ENCODE measurements at regions of chr7 and their contacts with region 1.

Region 1: GRCh38 chr7:16645593-16646471 is at the starts of genes ANKMY2 and BZW2:
- DNase-seq: peak; percentile 84 to 97 (median 92)
- ATAC-seq: peak; percentile 83
- H3K4me3 ChIP-seq: peak within 1 kb of the TSS; percentile 96 to 99
- H3K4me3 Mint-ChIP-seq: peak within 1 kb of the TSS; percentile 99
- H3K27ac ChIP-seq: peak within 1 kb of the TSS; percentile 83 to 93
- H3K27ac Mint-ChIP-seq: peak within 1 kb of the TSS; percentile 99
- H3K4me1 ChIP-seq: peaks cover 42% of the 10 kb centered on the region
- H3K4me1 Mint-ChIP-seq: peaks cover 70% of the 10 kb centered on the region
- H3K27me3 ChIP-seq: no peaks in the 10 kb centered on the region
- H3K27me3 Mint-ChIP-seq: no peaks in the 10 kb centered on the region
- CTCF ChIP-seq: no peak
- total RNA-seq, gene ANKMY2: 3.9 TPM
- total RNA-seq, gene BZW2: 23.2 to 23.8 TPM

Region 2: DNA sequence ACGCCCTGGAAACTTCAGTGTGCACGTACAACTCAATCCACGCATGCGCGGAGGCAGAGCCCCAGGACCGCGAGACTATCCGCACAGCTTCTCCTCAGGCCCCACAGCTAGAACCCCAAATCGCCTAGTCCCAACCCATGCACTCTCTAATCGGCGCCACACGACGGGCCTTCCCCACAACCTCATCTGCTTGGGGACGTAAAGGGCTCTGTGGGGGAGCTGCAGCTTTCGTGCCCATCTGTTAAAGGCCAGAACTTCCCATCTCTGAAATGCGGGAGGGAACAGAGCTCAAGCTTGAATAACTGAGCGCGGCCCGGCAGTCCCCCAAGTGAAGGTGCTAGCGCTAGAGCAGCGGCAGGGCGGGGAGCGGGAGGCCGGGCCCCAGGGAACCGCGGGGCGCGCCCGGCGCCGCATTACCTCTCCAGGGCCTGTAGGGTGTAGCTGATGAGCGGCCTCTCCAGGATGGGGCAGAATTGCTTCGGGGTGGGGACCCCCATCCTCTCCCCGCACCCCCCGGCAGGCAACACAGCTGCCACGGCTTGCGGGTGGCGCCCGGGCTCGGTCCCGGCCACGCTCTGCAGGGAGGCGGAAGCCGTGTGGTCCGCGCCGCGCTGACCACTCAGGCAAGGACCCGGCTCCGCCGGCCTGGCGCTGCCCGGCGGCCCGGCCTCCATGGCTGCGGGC is 225.0 kb before region 1 on chr7:
- CTCF ChIA-PET with region 1: interaction called, 3 read pairs
- POLR2A ChIA-PET with region 1: interaction called, 28 read pairs
- intact Hi-C with region 1: loop called (anchors 1 to 5 kb)
- DNase-seq: peak; percentile 46 to 95 (median 82)
- ATAC-seq: peak; percentile 92
- H3K4me3 ChIP-seq: peak overlapping the region; percentile 67 to 71
- H3K4me3 Mint-ChIP-seq: peak overlapping the region; percentile 87
- H3K27ac ChIP-seq: peak overlapping the region; percentile 68 to 89
- H3K27ac Mint-ChIP-seq: peak overlapping the region; percentile 93
- H3K4me1 ChIP-seq: peaks cover 15% of the 10 kb centered on the region
- H3K4me1 Mint-ChIP-seq: peaks cover 29% of the 10 kb centered on the region
- H3K27me3 ChIP-seq: no peaks in the 10 kb centered on the region
- H3K27me3 Mint-ChIP-seq: no peaks in the 10 kb centered on the region
- CTCF ChIP-seq: no peak

Region 3: DNA sequence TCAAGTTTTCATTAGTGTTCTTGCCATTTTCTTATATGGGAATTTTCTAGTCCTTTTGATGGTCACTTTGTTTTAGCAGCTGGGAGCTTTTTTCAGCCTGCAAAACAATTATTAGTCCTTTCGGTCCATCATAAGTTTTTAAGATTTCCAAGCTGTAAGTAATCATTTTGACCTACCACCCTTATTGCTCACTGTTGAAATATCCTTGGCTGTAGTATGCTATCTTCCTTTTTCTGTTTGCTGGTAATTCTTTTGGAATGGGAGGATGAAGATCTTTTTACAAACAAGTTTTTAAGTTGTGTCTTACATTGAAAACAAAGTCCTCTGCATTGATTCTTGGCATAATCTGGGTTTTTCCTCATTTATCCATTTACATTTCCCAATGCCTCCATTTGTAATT is 24.2 kb after region 1 on chr7:
- CTCF ChIA-PET with region 1: no interaction called
- POLR2A ChIA-PET with region 1: no interaction called
- intact Hi-C with region 1: loop called in 1 of 2 experiments (anchors 2 kb)
- DNase-seq: no peak
- ATAC-seq: no peak
- H3K4me3 ChIP-seq: no peak overlapping the region
- H3K4me3 Mint-ChIP-seq: no peak overlapping the region
- H3K27ac ChIP-seq: no peak overlapping the region
- H3K27ac Mint-ChIP-seq: no peak overlapping the region
- H3K4me1 ChIP-seq: no peaks in the 10 kb centered on the region
- H3K4me1 Mint-ChIP-seq: peaks cover 9% of the 10 kb centered on the region
- H3K27me3 ChIP-seq: no peaks in the 10 kb centered on the region
- H3K27me3 Mint-ChIP-seq: no peaks in the 10 kb centered on the region
- CTCF ChIP-seq: no peak

Region 4: GRCh38 chr7:17144322-17144721 is 498.5 kb after region 1 on chr7:
- CTCF ChIA-PET with region 1: no interaction called
- POLR2A ChIA-PET with region 1: no interaction called
- intact Hi-C with region 1: loop called in 1 of 2 experiments (anchors 10 kb)
- DNase-seq: peak in 8 of 9 experiments; percentile 25 to 68 (median 50)
- ATAC-seq: peak; percentile 76
- H3K4me3 ChIP-seq: no peak overlapping the region
- H3K4me3 Mint-ChIP-seq: peak overlapping the region; percentile 62
- H3K27ac ChIP-seq: no peak overlapping the region
- H3K27ac Mint-ChIP-seq: peak overlapping the region; percentile 53
- H3K4me1 ChIP-seq: peaks cover 26% of the 10 kb centered on the region
- H3K4me1 Mint-ChIP-seq: peaks cover 43% of the 10 kb centered on the region
- H3K27me3 ChIP-seq: no peaks in the 10 kb centered on the region
- H3K27me3 Mint-ChIP-seq: no peaks in the 10 kb centered on the region
- CTCF ChIP-seq: no peak

Region 5: DNA sequence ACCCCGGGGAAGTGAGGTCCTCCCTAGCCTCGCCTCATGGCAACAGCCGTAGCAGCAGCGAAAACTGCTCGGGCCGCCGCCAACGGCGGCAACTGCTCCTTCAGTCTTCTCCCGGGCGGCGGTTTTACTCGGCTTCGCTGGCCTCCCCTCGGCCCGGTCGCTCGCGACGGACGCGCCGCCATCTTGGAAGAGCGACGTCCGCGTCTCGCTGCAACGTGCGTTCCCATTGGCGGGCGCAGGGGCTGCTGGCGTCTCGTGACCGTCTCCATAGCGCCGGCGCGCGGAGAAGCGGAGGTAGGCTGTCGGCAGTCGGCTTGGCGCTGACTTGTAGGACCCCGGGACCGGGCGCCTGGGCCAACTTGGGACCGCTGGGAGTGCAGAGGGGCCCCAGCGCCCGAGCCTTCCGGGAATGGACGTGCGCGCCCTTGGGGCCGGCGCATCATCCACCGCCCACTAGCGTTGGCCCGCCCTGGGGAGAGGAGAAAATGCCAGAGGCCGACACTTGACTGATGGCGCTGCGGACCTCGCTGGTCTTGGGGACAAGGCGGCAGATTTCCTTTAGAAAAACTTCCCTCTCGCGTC is 1294.6 kb after region 1 on chr7 and contains the start of gene SNX13:
- CTCF ChIA-PET with region 1: no interaction called
- POLR2A ChIA-PET with region 1: no interaction called
- intact Hi-C with region 1: loop called (anchors 2 to 5 kb)
- DNase-seq: peak; percentile 75 to 95 (median 91)
- ATAC-seq: peak; percentile 93
- H3K4me3 ChIP-seq: peak within 1 kb of the TSS; percentile 67 to 94
- H3K4me3 Mint-ChIP-seq: peak within 1 kb of the TSS; percentile 98
- H3K27ac ChIP-seq: peak within 1 kb of the TSS; percentile 95 to 98
- H3K27ac Mint-ChIP-seq: peak within 1 kb of the TSS; percentile 99
- H3K4me1 ChIP-seq: peaks cover 29% of the 10 kb centered on the region
- H3K4me1 Mint-ChIP-seq: peaks cover 52% of the 10 kb centered on the region
- H3K27me3 ChIP-seq: no peaks in the 10 kb centered on the region
- H3K27me3 Mint-ChIP-seq: no peaks in the 10 kb centered on the region
- CTCF ChIP-seq: no peak
- total RNA-seq, gene SNX13: 22.0 to 23.9 TPM